ENCODE measurements at regions of chr4 and their contacts with region 1.

Region 1: GRCh38 chr4:124504431-124504830 is 208.1 kb downstream of the ANKRD50 start:
- DNase-seq: no peak
- ATAC-seq: no peak
- H3K4me3 ChIP-seq: no peak overlapping the region
- H3K27ac ChIP-seq: no peak overlapping the region
- H3K4me1 ChIP-seq: no peaks in the 10 kb centered on the region
- H3K27me3 ChIP-seq: no peaks in the 10 kb centered on the region
- CTCF ChIP-seq: no peak
- POLR2A ChIP-seq: no peak

Region 2: DNA sequence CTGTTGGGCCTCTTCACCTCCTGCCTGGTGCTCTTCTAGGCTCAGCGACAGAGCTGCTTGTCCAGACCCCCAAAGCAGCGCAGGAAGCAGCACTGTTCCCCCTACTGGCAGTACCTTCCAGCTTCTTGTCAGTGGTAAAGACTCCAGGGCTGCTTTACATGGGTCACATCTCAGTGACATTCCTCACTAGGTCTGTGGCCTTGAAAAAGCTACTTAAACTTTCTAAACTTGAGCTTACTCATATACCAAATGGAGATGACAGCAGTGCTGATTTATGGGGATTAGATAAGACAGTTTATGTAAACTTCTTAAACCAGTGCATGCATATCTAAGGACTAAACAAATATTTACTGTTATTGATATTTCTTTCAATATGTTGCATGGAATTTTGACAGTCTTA is 927.7 kb after region 1 on chr4:
- intact Hi-C with region 1: loop called in 1 of 10 experiments (anchors 10 kb)
- DNase-seq: peak in 2 of 5 donors; percentile 27 to 36
- ATAC-seq: peak; percentile 61 to 86 (median 78)
- H3K4me3 ChIP-seq: no peak overlapping the region
- H3K27ac ChIP-seq: no peak overlapping the region
- H3K4me1 ChIP-seq: peaks cover 0 to 18% (median 0%) of the 10 kb centered on the region in 12 donors
- H3K27me3 ChIP-seq: no peaks in the 10 kb centered on the region
- CTCF ChIP-seq: peak in 9 of 12 donors; percentile 27 to 51 (median 40)
- POLR2A ChIP-seq: no peak